Natural killer cell (primary cell): ENCODE measurements at regions of chr6 and their contacts with region 1.

Region 1: GRCh38 chr6:106539936-106540335 is 89.4 kb downstream of the RTN4IP1 start:
- DNase-seq: no peak
- ATAC-seq: no peak
- H3K4me3 ChIP-seq: no peak overlapping the region
- H3K4me3 Mint-ChIP-seq: no peak overlapping the region
- H3K27ac ChIP-seq: no peak overlapping the region
- H3K27ac Mint-ChIP-seq: no peak overlapping the region
- H3K4me1 ChIP-seq: peaks cover 17% of the 10 kb centered on the region
- H3K4me1 Mint-ChIP-seq: peaks cover 3 to 23% of the 10 kb centered on the region in 2 donors
- H3K27me3 ChIP-seq: no peaks in the 10 kb centered on the region
- H3K27me3 Mint-ChIP-seq: no peaks in the 10 kb centered on the region
- CTCF ChIP-seq: no peak

Region 2: GRCh38 chr6:106501960-106502371 is 38.0 kb before region 1 on chr6:
- intact Hi-C with region 1: loop called (anchors 5 kb)
- DNase-seq: no peak
- ATAC-seq: no peak
- H3K4me3 ChIP-seq: no peak overlapping the region
- H3K4me3 Mint-ChIP-seq: no peak overlapping the region
- H3K27ac ChIP-seq: no peak overlapping the region
- H3K27ac Mint-ChIP-seq: no peak overlapping the region
- H3K4me1 ChIP-seq: no peaks in the 10 kb centered on the region
- H3K4me1 Mint-ChIP-seq: no peaks in the 10 kb centered on the region
- H3K27me3 ChIP-seq: no peaks in the 10 kb centered on the region
- H3K27me3 Mint-ChIP-seq: peaks cover 8 to 9% of the 10 kb centered on the region in 2 donors
- CTCF ChIP-seq: no peak